ENCODE measurements at regions of chr7 and their contacts with region 1.

Region 1: GRCh38 chr7:92691578-92691977 is 101.4 kb upstream of the FAM133B start:
- DNase-seq: peak; percentile 45 to 61 (median 54)
- H3K4me3 ChIP-seq: no peak overlapping the region
- H3K4me3 Mint-ChIP-seq: no peak overlapping the region
- H3K27ac ChIP-seq: no peak overlapping the region
- H3K27ac Mint-ChIP-seq: no peak overlapping the region
- H3K4me1 ChIP-seq: peaks cover 0 to 6% of the 10 kb centered on the region in 2 donors
- H3K4me1 Mint-ChIP-seq: peaks cover 15% of the 10 kb centered on the region
- H3K27me3 ChIP-seq: no peaks in the 10 kb centered on the region
- H3K27me3 Mint-ChIP-seq: no peaks in the 10 kb centered on the region
- CTCF ChIP-seq: peak; percentile 78

Region 2: DNA sequence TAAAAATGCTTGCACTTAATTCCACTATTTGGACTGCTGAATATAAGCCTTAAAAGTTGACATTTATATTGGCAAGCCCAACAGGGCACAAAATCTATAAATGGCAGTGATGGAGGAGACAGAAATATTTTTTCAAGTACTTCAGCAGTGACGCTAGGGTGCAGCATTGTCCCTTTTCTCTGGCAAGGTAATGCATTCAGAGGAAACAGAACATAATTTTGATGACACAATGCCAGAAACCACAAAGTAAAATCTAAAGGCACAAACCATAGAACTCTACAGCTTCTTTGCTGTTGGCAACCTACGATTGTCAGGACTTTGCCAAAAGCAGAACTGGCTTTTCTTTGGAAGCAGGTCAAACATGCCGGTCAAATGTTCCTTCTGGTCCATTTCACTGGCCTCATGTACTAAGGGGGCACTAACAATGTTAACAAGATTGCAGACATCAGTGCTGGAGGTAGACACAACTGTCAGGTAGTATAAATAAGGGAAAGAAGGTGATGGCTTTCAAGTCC is 70.5 kb before region 1 on chr7:
- intact Hi-C with region 1: loop called in 1 of 2 experiments (anchors 5 kb)
- DNase-seq: peak; percentile 85 to 90 (median 87)
- H3K4me3 ChIP-seq: peak overlapping the region in 1 of 3 experiments; percentile 53
- H3K4me3 Mint-ChIP-seq: peak overlapping the region; percentile 45 to 76
- H3K27ac ChIP-seq: peak overlapping the region in 1 of 2 donors; percentile 75
- H3K27ac Mint-ChIP-seq: peak overlapping the region; percentile 53 to 92 (median 80)
- H3K4me1 ChIP-seq: peaks cover 9 to 21% of the 10 kb centered on the region in 2 donors
- H3K4me1 Mint-ChIP-seq: peaks cover 22% of the 10 kb centered on the region
- H3K27me3 ChIP-seq: no peaks in the 10 kb centered on the region
- H3K27me3 Mint-ChIP-seq: no peaks in the 10 kb centered on the region
- CTCF ChIP-seq: peak; percentile 80

Region 3: DNA sequence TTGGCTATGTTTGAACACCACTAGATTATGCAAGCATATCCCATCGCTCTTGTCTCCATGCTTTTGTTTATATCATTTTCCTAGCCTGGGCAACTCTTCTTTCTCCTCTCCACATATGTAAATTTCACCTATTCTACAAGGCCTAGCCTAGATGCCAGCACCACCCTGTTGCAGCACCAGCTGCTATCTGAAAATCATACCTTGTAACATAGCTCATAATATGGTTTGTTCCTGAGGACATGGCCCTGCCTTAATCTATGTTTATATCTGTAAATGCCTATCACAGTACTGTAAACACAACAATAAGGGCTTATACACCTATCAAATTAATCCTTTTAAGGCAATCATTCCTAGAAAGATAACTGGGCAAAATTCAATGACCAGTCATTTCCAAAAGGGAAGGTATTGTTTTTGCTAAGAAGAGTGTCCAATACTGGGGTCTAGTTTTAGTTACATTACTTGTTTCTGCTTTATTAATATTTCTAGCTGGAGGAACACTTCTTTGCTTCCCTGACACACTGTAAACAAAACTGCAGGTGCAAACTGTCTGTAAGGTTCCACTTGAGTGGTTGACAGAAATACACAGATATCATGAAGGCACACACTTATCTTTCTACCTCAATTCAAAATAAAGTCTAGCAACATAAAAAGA is 17.3 kb before region 1 on chr7:
- intact Hi-C with region 1: no loop called
- DNase-seq: no peak
- H3K4me3 ChIP-seq: no peak overlapping the region
- H3K4me3 Mint-ChIP-seq: no peak overlapping the region
- H3K27ac ChIP-seq: no peak overlapping the region
- H3K27ac Mint-ChIP-seq: no peak overlapping the region
- H3K4me1 ChIP-seq: peaks cover 0 to 4% of the 10 kb centered on the region in 2 donors
- H3K4me1 Mint-ChIP-seq: peaks cover 5% of the 10 kb centered on the region
- H3K27me3 ChIP-seq: no peaks in the 10 kb centered on the region
- H3K27me3 Mint-ChIP-seq: no peaks in the 10 kb centered on the region
- CTCF ChIP-seq: no peak

Region 4: DNA sequence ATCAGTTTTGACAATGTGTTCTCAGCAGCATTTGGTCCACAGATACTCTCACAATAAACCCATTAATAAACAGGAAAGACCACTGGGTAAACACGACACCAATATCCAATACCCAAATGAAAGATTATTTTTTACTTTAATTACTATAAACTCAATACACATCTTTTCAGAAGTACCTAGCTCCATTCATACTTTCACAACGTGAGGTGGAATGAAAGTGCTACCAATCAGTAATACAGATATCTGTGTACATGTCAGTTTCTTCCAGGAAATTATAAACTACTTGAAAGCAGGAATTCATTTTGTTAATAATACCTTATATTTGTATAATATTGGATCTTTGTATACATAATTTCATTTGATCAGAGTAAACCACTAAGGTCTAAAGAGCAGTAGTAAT is 132.9 kb after region 1 on chr7:
- intact Hi-C with region 1: no loop called
- DNase-seq: no peak
- H3K4me3 ChIP-seq: no peak overlapping the region
- H3K4me3 Mint-ChIP-seq: no peak overlapping the region
- H3K27ac ChIP-seq: no peak overlapping the region
- H3K27ac Mint-ChIP-seq: no peak overlapping the region
- H3K4me1 ChIP-seq: no peaks in the 10 kb centered on the region
- H3K4me1 Mint-ChIP-seq: peaks cover 13% of the 10 kb centered on the region
- H3K27me3 ChIP-seq: no peaks in the 10 kb centered on the region
- H3K27me3 Mint-ChIP-seq: no peaks in the 10 kb centered on the region
- CTCF ChIP-seq: no peak

Region 5: GRCh38 chr7:93055543-93056107 is 364.0 kb after region 1 on chr7:
- intact Hi-C with region 1: loop called (anchors 10 kb)
- DNase-seq: peak; percentile 12 to 52 (median 35)
- H3K4me3 ChIP-seq: no peak overlapping the region
- H3K4me3 Mint-ChIP-seq: no peak overlapping the region
- H3K27ac ChIP-seq: no peak overlapping the region
- H3K27ac Mint-ChIP-seq: peak overlapping the region in 1 of 7 donors; percentile 42
- H3K4me1 ChIP-seq: peaks cover 10 to 11% of the 10 kb centered on the region in 2 donors
- H3K4me1 Mint-ChIP-seq: peaks cover 13% of the 10 kb centered on the region
- H3K27me3 ChIP-seq: no peaks in the 10 kb centered on the region
- H3K27me3 Mint-ChIP-seq: peaks cover 0 to 2% (median 0%) of the 10 kb centered on the region in 3 donors
- CTCF ChIP-seq: peak; percentile 92

Measured in CD14-positive monocyte (primary cell).